Breast epithelium (tissue), 4 donors: ENCODE measurements at regions of chr2 and their contacts with region 1.

Region 1: GRCh38 chr2:62065243-62065642 is 130.7 kb upstream of the B3GNT2 start:
- DNase-seq: no peak
- H3K4me3 ChIP-seq: no peak overlapping the region
- H3K27ac ChIP-seq: no peak overlapping the region
- H3K4me1 ChIP-seq: no peaks in the 10 kb centered on the region
- H3K27me3 ChIP-seq: no peaks in the 10 kb centered on the region
- CTCF ChIP-seq: no peak
- POLR2A ChIP-seq: no peak

Region 2: GRCh38 chr2:61980758-61981157 is 84.5 kb before region 1 on chr2:
- intact Hi-C with region 1: loop called (anchors 5 kb)
- DNase-seq: no peak
- H3K4me3 ChIP-seq: no peak overlapping the region
- H3K27ac ChIP-seq: no peak overlapping the region
- H3K4me1 ChIP-seq: no peaks in the 10 kb centered on the region
- H3K27me3 ChIP-seq: no peaks in the 10 kb centered on the region
- CTCF ChIP-seq: no peak
- POLR2A ChIP-seq: no peak